Heart left ventricle (tissue), 16 donors: ENCODE measurements at regions of chr4 and their contacts with region 1.

Region 1: GRCh38 chr4:41360214-41360920 is 103.6 kb downstream of the UCHL1 start:
- DNase-seq: peak; percentile 86 to 91 (median 89)
- ATAC-seq: peak; percentile 57 to 89 (median 80)
- H3K4me3 ChIP-seq: peak overlapping the region; percentile 70 to 94 (median 86)
- H3K27ac ChIP-seq: peak overlapping the region; percentile 64 to 96 (median 86)
- H3K4me1 ChIP-seq: peaks cover 0 to 54% (median 28%) of the 10 kb centered on the region in 12 donors
- H3K27me3 ChIP-seq: peaks cover 0 to 20% (median 0%) of the 10 kb centered on the region in 9 donors
- CTCF ChIP-seq: no peak
- POLR2A ChIP-seq: peak in 1 of 2 donors; percentile 52

Region 2: GRCh38 chr4:41178356-41179080 is 181.8 kb before region 1 on chr4:
- intact Hi-C with region 1: no loop called
- DNase-seq: no peak
- ATAC-seq: peak in 3 of 4 donors; percentile 77 to 90 (median 85)
- H3K4me3 ChIP-seq: no peak overlapping the region
- H3K27ac ChIP-seq: peak overlapping the region in 2 of 12 donors; percentile 6 to 38
- H3K4me1 ChIP-seq: peaks cover 0 to 49% (median 40%) of the 10 kb centered on the region in 12 donors
- H3K27me3 ChIP-seq: no peaks in the 10 kb centered on the region
- CTCF ChIP-seq: no peak
- POLR2A ChIP-seq: no peak

Region 3: GRCh38 chr4:41281038-41281634 is 79.2 kb before region 1 on chr4:
- intact Hi-C with region 1: loop called in 3 of 10 experiments (anchors 5 kb)
- DNase-seq: peak in 2 of 5 donors; percentile 35 to 50
- ATAC-seq: peak; percentile 94 to 96 (median 95)
- H3K4me3 ChIP-seq: no peak overlapping the region
- H3K27ac ChIP-seq: no peak overlapping the region
- H3K4me1 ChIP-seq: peaks cover 0 to 7% (median 0%) of the 10 kb centered on the region in 12 donors
- H3K27me3 ChIP-seq: peaks cover 0 to 4% (median 0%) of the 10 kb centered on the region in 9 donors
- CTCF ChIP-seq: peak; percentile 78 to 94 (median 87)
- POLR2A ChIP-seq: no peak

Region 4: GRCh38 chr4:41307638-41308037 is 52.7 kb before region 1 on chr4:
- intact Hi-C with region 1: loop called in 1 of 10 experiments (anchors 10 kb)
- DNase-seq: peak in 3 of 5 donors; percentile 23 to 34 (median 27)
- ATAC-seq: peak; percentile 40 to 94 (median 70)
- H3K4me3 ChIP-seq: no peak overlapping the region
- H3K27ac ChIP-seq: peak overlapping the region in 7 of 12 donors; percentile 9 to 50 (median 37)
- H3K4me1 ChIP-seq: peaks cover 0 to 14% (median 6%) of the 10 kb centered on the region in 12 donors
- H3K27me3 ChIP-seq: no peaks in the 10 kb centered on the region
- CTCF ChIP-seq: no peak
- POLR2A ChIP-seq: no peak

Region 5: DNA sequence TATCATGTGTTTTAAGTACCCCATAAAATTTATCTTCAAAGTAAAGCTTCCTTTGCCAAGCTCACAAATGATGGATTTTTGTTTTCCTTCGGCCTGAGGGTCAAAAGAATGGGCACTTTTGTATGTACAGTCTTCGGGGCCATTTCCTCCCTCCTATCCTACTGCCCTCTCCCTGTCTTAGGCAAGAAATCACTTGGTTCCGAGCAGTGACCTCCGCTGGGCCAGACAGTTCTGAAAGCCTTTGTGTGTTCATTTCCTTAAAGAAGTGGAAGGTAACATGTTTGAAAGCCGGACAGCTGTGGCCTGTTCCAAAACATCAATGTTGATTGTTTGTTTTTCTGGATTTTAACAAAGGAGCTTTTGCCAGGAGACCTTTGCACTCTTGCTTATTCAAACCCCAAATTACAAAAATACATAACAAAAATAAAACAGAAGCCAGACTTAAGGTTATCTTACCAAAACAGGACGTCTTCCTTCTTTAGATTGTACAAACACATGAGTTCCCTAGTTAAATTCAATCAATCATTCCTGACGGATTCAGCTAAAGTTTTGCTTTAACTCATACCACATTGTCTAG is 67.0 kb after region 1 on chr4:
- intact Hi-C with region 1: loop called in 6 of 10 experiments (anchors 5 to 10 kb)
- DNase-seq: no peak
- ATAC-seq: peak in 3 of 4 donors; percentile 15 to 61 (median 52)
- H3K4me3 ChIP-seq: no peak overlapping the region
- H3K27ac ChIP-seq: peak overlapping the region in 11 of 12 donors; percentile 16 to 93 (median 67)
- H3K4me1 ChIP-seq: peaks cover 5 to 89% (median 60%) of the 10 kb centered on the region in 12 donors
- H3K27me3 ChIP-seq: no peaks in the 10 kb centered on the region
- CTCF ChIP-seq: no peak
- POLR2A ChIP-seq: no peak

Region 6: DNA sequence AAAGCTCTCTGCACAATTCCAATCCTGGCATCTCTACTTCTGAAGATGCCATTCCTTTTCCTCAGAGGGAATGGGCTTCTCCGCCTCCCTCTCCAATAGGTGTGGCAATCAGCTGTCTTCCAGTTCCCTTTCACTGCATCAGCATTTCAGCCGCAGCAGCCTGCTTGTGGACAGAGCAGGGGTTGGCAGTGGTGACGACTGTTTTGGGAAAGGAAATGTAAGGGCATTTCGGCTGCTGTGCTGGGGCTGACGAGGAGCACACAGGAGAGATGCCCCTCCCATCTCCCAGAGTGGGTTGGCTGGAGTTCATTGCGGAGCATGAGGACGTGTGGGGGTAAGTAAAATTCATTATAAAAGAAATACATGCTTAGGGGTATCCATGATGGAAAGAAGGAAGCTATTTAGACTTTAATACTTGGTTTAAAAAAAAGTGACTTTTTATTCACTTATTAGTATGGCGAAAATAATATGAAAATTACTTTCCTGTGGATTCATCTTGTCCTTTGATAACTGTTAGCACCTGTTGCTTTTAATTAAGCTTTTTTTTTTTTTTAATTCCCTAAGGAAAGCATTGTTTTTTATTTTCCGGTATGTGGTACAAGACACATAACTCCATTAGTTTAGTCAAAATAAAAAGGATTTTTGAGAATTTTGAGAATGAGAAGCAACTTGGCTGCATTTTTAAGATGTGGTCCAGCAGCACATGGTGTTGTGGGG is 177.8 kb after region 1 on chr4 and contains the start of gene LIMCH1:
- intact Hi-C with region 1: loop called in 9 of 10 experiments (anchors 2 to 10 kb)
- DNase-seq: peak; percentile 79 to 90 (median 81)
- ATAC-seq: peak; percentile 82 to 92 (median 86)
- H3K4me3 ChIP-seq: peak within 1 kb of the TSS; percentile 7 to 51 (median 33)
- H3K27ac ChIP-seq: peak within 1 kb of the TSS; percentile 75 to 95 (median 88)
- H3K4me1 ChIP-seq: peaks cover 0 to 99% (median 79%) of the 10 kb centered on the region in 12 donors
- H3K27me3 ChIP-seq: no peaks in the 10 kb centered on the region
- CTCF ChIP-seq: no peak
- POLR2A ChIP-seq: no peak
- total RNA-seq, gene LIMCH1: 169 to 345 (median 247) TPM

Region 7: GRCh38 chr4:41644288-41644914 is 284.0 kb after region 1 on chr4:
- intact Hi-C with region 1: loop called in 3 of 10 experiments (anchors 5 to 10 kb)
- DNase-seq: peak; percentile 64 to 87 (median 77)
- ATAC-seq: peak; percentile 63 to 94 (median 92)
- H3K4me3 ChIP-seq: peak overlapping the region in 6 of 12 donors; percentile 7 to 31 (median 14)
- H3K27ac ChIP-seq: peak overlapping the region in 4 of 12 donors; percentile 27 to 55 (median 46)
- H3K4me1 ChIP-seq: peaks cover 0 to 36% (median 24%) of the 10 kb centered on the region in 12 donors
- H3K27me3 ChIP-seq: peaks cover 0 to 19% (median 0%) of the 10 kb centered on the region in 9 donors
- CTCF ChIP-seq: peak; percentile 76 to 96 (median 90)
- POLR2A ChIP-seq: no peak